Endothelial cell of umbilical vein (primary cell): ENCODE measurements at regions of chr2 and their contacts with region 1.

Region 1: GRCh38 chr2:69082430-69082997 is 69.5 kb downstream of the ANTXR1 start:
- DNase-seq: peak; percentile 87
- H3K4me3 ChIP-seq: no peak overlapping the region
- H3K27ac ChIP-seq: peak overlapping the region; percentile 47
- H3K4me1 ChIP-seq: peaks cover 20% of the 10 kb centered on the region
- H3K27me3 ChIP-seq: no peaks in the 10 kb centered on the region
- CTCF ChIP-seq: no peak
- POLR2A ChIP-seq: no peak

Region 2: DNA sequence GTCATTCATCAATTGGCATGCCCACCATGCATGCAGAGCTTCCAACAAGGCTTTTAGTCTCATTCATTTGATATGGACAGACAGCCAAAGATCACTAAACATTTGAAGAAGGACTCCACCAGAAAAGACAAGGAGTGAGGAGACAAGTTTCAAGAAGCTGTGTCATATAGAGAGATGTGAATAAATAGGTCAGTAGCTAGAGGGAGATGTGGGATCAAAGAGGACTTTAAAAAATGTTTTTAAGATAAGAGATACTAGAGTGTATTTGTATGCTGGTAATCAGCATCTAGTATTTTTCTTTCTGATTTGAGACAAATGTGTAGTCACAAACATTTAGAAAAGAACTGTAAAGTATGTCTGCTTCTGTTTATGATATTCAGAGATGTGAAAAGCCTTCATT is 21.0 kb before region 1 on chr2:
- CTCF ChIA-PET with region 1: interaction called, 12 read pairs
- POLR2A ChIA-PET with region 1: no interaction called
- dilution Hi-C with region 1: no loop called
- intact Hi-C with region 1: no loop called
- DNase-seq: peak; percentile 21
- H3K4me3 ChIP-seq: no peak overlapping the region
- H3K27ac ChIP-seq: no peak overlapping the region
- H3K4me1 ChIP-seq: peaks cover 18% of the 10 kb centered on the region
- H3K27me3 ChIP-seq: no peaks in the 10 kb centered on the region
- CTCF ChIP-seq: no peak
- POLR2A ChIP-seq: no peak

Region 3: DNA sequence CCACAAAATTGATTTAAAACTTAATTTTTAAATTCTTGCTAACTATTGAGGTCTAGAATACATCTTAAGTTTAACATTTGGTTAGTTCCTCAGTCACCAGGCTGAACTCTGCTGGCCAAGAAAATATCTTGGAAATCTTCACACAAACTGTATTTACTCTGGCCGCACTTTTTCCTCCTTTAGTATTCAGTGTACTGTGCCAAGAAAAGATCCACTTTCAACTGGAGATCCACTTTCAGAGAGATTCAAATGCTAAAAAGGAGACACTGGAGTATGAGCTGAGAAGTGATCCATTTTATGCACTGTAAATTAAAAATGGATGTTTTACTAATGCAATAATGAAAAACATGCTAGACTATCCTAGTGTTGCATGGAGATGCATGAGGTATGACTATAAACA is 28.6 kb after region 1 on chr2:
- CTCF ChIA-PET with region 1: no interaction called
- POLR2A ChIA-PET with region 1: no interaction called
- dilution Hi-C with region 1: no loop called
- intact Hi-C with region 1: no loop called
- DNase-seq: no peak
- H3K4me3 ChIP-seq: no peak overlapping the region
- H3K27ac ChIP-seq: no peak overlapping the region
- H3K4me1 ChIP-seq: no peaks in the 10 kb centered on the region
- H3K27me3 ChIP-seq: no peaks in the 10 kb centered on the region
- CTCF ChIP-seq: no peak
- POLR2A ChIP-seq: no peak

Region 4: DNA sequence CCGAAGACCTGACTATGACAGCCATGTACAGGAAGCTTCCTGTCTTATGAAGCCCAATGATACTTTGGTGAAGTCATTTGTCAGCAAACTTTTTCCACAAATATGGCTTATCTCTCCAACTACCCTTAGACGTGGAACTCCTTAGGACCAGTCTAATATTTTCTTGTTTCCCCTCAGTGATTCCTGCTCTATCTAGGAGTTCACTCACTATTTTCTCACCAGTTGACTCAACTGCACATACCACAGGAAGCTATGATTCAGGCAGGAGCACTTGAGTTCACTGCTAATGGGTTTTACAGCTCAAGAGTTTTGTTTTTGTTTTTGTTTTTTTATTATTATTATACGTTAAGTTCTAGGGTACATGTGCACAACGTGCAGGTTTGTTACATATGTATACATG is 39.8 kb after region 1 on chr2:
- CTCF ChIA-PET with region 1: interaction called, 3 read pairs
- POLR2A ChIA-PET with region 1: no interaction called
- dilution Hi-C with region 1: no loop called
- intact Hi-C with region 1: loop called (anchors 1 kb)
- DNase-seq: peak; percentile 84
- H3K4me3 ChIP-seq: no peak overlapping the region
- H3K27ac ChIP-seq: peak overlapping the region; percentile 55
- H3K4me1 ChIP-seq: peaks cover 26% of the 10 kb centered on the region
- H3K27me3 ChIP-seq: no peaks in the 10 kb centered on the region
- CTCF ChIP-seq: no peak
- POLR2A ChIP-seq: no peak